Activated CD4-positive, alpha-beta memory T cell treated with anti-CD3 and anti-CD28 coated beads for 36 hours (primary cell): ENCODE measurements at regions of chr2 and their contacts with region 1.

Region 1: GRCh38 chr2:226835796-226836547 is at the start of gene RHBDD1:
- DNase-seq: peak; percentile 96
- H3K4me3 Mint-ChIP-seq: peak within 1 kb of the TSS; percentile 92
- H3K27ac Mint-ChIP-seq: peak within 1 kb of the TSS; percentile 99
- H3K4me1 Mint-ChIP-seq: peaks cover 56% of the 10 kb centered on the region
- H3K27me3 Mint-ChIP-seq: no peaks in the 10 kb centered on the region
- total RNA-seq, gene RHBDD1: 38.0 to 41.1 TPM

Region 2: GRCh38 chr2:226423498-226423960 is 412.4 kb before region 1 on chr2:
- CTCF ChIA-PET with region 1: no interaction called
- POLR2A ChIA-PET with region 1: no interaction called
- intact Hi-C with region 1: loop called (anchors 10 kb)
- DNase-seq: peak; percentile 66
- H3K4me3 Mint-ChIP-seq: peak overlapping the region; percentile 5
- H3K27ac Mint-ChIP-seq: no peak overlapping the region
- H3K4me1 Mint-ChIP-seq: peaks cover 15% of the 10 kb centered on the region
- H3K27me3 Mint-ChIP-seq: peaks cover 11% of the 10 kb centered on the region

Region 3: GRCh38 chr2:226799181-226799975 is 36.6 kb before region 1 on chr2 and contains the start of gene IRS1:
- CTCF ChIA-PET with region 1: interaction called, 13 read pairs
- POLR2A ChIA-PET with region 1: interaction called, 11 read pairs
- intact Hi-C with region 1: loop called (anchors 1 kb)
- DNase-seq: peak; percentile 74
- H3K4me3 Mint-ChIP-seq: peak within 1 kb of the TSS; percentile 80
- H3K27ac Mint-ChIP-seq: peak within 1 kb of the TSS; percentile 38
- H3K4me1 Mint-ChIP-seq: peaks cover 24% of the 10 kb centered on the region
- H3K27me3 Mint-ChIP-seq: peaks cover 13% of the 10 kb centered on the region
- total RNA-seq, gene IRS1: 2.0 to 2.1 TPM

Region 4: DNA sequence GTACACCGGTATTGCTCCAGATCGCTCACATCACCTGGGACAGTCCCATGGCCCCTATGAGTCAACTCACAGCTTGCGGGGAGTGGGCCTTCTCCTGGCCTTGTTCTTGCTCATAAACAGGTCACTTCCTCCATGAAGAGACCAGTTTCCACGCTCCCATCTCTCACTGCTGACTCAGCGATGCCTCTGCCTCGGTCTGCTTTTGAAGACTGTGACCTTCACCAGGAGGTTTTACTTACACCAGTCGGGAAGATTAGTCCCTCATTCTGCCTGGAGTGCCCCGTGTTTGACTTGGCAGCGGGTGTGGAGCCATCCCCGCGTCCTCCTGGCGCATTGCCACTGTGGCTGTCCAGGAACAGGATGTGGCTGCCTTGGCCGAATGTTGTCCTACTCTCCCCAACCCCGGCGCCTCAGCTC is 159.7 kb after region 1 on chr2:
- CTCF ChIA-PET with region 1: no interaction called
- POLR2A ChIA-PET with region 1: no interaction called
- intact Hi-C with region 1: loop called (anchors 2 kb)
- DNase-seq: peak; percentile 82
- H3K4me3 Mint-ChIP-seq: no peak overlapping the region
- H3K27ac Mint-ChIP-seq: no peak overlapping the region
- H3K4me1 Mint-ChIP-seq: peaks cover 13% of the 10 kb centered on the region
- H3K27me3 Mint-ChIP-seq: no peaks in the 10 kb centered on the region

Region 5: GRCh38 chr2:227460070-227460485 is 624.1 kb after region 1 on chr2:
- CTCF ChIA-PET with region 1: no interaction called
- POLR2A ChIA-PET with region 1: no interaction called
- intact Hi-C with region 1: loop called (anchors 2 kb)
- DNase-seq: peak; percentile 83
- H3K4me3 Mint-ChIP-seq: peak overlapping the region; percentile 51
- H3K27ac Mint-ChIP-seq: peak overlapping the region; percentile 90
- H3K4me1 Mint-ChIP-seq: peaks cover 74% of the 10 kb centered on the region
- H3K27me3 Mint-ChIP-seq: no peaks in the 10 kb centered on the region